Activated T-helper 1 cell treated with anti-CD3 and anti-CD28 coated beads, Interleukin-12 subunit alpha, Interleukin-12 subunit beta, Interleukin-2, Interleukin-4 antibody, amounts not matched to agents 30 ng/mL and 10 ng/mL and 1 ng/mL, durations not matched to agents 14 hours and 24 hours and 36 hours (primary cell): ENCODE measurements at regions of chr2 and their contacts with region 1.

Region 1: DNA sequence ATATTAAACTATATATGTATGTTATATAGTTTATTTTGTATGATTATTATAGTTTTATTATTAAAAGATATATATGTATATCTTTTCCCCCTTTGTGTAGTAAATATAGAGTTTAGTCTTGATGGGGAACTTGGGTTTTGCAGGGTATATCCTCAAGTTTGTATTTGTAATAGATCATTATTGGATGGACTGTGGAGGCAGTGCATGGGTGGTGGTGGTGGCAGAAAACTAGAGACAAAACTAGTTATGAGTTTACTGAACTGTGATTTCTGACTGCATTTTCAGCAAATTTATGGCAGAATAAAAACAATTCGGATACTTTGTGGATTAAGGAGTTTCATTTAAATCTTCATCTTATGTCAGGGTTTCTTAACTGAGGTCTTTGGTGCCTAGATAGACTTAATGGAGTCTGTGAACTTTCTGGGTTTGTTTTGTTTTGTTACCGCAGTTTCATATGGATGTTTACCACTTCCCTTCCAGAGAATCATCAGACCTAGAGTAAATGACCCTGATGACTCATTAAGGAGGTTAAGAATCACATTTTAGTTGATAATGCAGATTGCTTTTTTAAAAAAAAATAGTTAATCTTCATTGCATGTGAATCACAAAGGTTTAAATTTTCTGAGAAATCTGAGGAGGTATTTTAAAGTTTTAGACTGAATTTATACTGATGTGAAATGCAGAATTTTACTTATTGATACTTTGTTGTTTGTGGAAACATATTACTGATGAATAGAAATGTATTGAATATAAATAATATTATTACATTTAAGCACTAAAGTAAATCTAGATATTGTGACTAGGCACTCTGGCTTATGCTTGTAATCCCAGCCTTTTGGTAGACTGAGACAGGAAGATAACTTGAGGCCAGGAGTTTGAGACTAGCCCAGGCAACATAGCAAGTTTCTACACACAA is 14.5 kb downstream of the EPC2 start:
- DNase-seq: no peak
- H3K4me3 Mint-ChIP-seq: peak overlapping the region; percentile 25
- H3K27ac Mint-ChIP-seq: peak overlapping the region; percentile 49
- H3K4me1 Mint-ChIP-seq: peaks cover 66% of the 10 kb centered on the region
- H3K27me3 Mint-ChIP-seq: no peaks in the 10 kb centered on the region

Region 2: DNA sequence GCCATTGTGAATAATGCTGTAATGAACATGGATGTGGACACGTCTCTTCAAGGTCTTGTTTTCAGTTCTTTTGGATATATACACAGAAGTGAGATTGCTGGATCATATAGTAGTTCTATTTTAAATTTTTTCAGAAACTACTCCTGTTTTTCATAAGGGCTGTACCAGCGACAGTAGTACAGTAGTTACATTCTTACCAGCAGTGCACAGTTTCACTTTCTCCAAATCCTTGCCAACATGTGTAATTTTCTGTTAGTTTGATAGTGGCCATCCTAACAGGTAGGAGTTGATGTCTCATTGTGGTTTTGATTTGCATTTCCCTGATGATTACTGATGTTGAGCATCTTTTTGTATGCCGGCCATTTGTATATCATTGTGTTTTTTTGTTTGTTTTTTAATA is 67.2 kb after region 1 on chr2:
- intact Hi-C with region 1: loop called (anchors 5 kb)
- DNase-seq: no peak
- H3K4me3 Mint-ChIP-seq: no peak overlapping the region
- H3K27ac Mint-ChIP-seq: no peak overlapping the region
- H3K4me1 Mint-ChIP-seq: peaks cover 46% of the 10 kb centered on the region
- H3K27me3 Mint-ChIP-seq: no peaks in the 10 kb centered on the region

Region 3: DNA sequence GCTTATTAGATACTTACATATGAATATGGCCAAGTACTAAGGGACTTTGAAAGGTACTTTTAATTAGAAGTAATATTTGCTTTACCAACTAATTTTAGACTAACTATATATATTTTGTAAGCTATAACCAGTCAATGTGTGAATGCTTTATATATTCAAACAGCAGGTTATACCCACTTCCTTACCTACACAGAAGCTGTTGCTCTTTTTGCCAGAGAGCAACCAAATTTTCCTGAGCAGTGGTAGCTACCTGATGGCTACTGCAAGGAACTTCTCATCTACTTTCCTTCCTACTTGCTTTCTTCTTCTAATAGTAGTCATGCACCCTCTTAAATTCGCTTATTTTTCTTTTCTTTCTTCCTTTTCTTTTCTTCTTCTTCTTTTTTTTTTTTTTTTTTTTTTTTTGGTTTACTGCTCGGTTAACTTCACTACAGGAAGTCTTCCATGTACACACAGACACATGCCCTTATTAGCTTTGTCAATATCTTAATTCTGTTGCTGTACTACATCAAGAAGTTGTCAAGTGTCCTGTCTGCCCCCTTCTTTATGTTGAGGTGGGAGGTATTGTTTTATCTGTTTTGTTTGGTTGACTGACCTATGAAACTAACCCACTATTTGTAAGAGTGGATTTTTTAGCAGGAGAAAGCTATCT is 80.5 kb after region 1 on chr2:
- intact Hi-C with region 1: no loop called
- DNase-seq: no peak
- H3K4me3 Mint-ChIP-seq: no peak overlapping the region
- H3K27ac Mint-ChIP-seq: no peak overlapping the region
- H3K4me1 Mint-ChIP-seq: no peaks in the 10 kb centered on the region
- H3K27me3 Mint-ChIP-seq: no peaks in the 10 kb centered on the region

Region 4: GRCh38 chr2:148914463-148914862 is 255.4 kb after region 1 on chr2:
- intact Hi-C with region 1: no loop called
- DNase-seq: no peak
- H3K4me3 Mint-ChIP-seq: no peak overlapping the region
- H3K27ac Mint-ChIP-seq: no peak overlapping the region
- H3K4me1 Mint-ChIP-seq: peaks cover 10% of the 10 kb centered on the region
- H3K27me3 Mint-ChIP-seq: peaks cover 2% of the 10 kb centered on the region